HepG2 (cell line): ENCODE measurements at regions of chr9 and their contacts with region 1.

Region 1: DNA sequence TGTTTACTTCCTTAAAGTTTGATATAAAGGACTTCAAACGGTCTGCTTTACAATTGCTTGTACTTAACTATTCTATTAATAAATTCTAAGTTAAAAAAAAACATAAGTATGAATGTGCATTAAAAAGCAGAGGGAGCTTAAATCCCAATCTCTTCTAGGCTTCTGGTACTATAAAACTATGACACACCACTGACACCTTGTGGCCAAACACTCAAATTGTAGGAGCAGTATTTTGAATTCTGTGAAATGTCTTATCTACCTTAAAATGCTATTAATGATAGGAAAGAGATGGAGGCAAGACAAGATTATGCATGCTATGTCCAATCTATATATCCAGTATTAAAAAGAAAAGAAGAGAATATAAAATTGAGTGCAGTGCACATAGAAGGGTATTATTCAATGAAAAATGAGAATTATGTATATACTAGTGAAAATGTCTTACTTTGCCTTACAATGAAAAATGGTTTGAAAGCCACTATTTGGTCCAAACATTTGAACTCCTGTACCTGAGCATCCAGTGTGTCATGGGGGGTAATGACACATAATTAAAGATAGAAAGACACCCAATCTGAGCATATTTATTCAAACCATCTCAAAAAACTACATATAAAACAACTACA is 87.6 kb downstream of the ERP44 start:
- DNase-seq: peak; percentile 59
- ATAC-seq: peak; percentile 46; the same call in 1 of the 3 replicates
- H3K4me3 ChIP-seq: no peak overlapping the region
- H3K27ac ChIP-seq: no peak overlapping the region
- H3K4me1 ChIP-seq: no peaks in the 10 kb centered on the region
- H3K27me3 ChIP-seq: no peaks in the 10 kb centered on the region
- CTCF ChIP-seq: peak; percentile 70
- EP300 ChIP-seq: no peak
- POLR2A ChIP-seq: no peak
- RAD21 ChIP-seq: peak; percentile 47; the same call in 1 of the 2 replicates

Region 2: GRCh38 chr9:99162759-99163364 is 848.3 kb before region 1 on chr9:
- CTCF ChIA-PET with region 1: interaction called, 6 read pairs
- POLR2A ChIA-PET with region 1: no interaction called
- in situ Hi-C with region 1: no loop called
- intact Hi-C with region 1: loop called (anchors 1 kb)
- DNase-seq: peak; percentile 43
- ATAC-seq: peak; percentile 25; the same call in 1 of the 3 replicates
- H3K4me3 ChIP-seq: no peak overlapping the region
- H3K27ac ChIP-seq: no peak overlapping the region
- H3K4me1 ChIP-seq: peaks cover 11% of the 10 kb centered on the region
- H3K27me3 ChIP-seq: no peaks in the 10 kb centered on the region; a peak in 1 of 5 replicates
- CTCF ChIP-seq: peak; percentile 75
- EP300 ChIP-seq: no peak
- POLR2A ChIP-seq: no peak
- RAD21 ChIP-seq: peak; percentile 63

Region 3: GRCh38 chr9:99184475-99185347 is 826.5 kb before region 1 on chr9:
- CTCF ChIA-PET with region 1: interaction called, 5 read pairs
- POLR2A ChIA-PET with region 1: no interaction called
- in situ Hi-C with region 1: loop called (anchors 25 kb)
- intact Hi-C with region 1: loop called (anchors 2 kb)
- DNase-seq: peak; percentile 80
- ATAC-seq: peak; percentile 93
- H3K4me3 ChIP-seq: peak overlapping the region; percentile 21 to 74 (median 46); a peak in 5 of 6 replicates
- H3K27ac ChIP-seq: no peak overlapping the region
- H3K4me1 ChIP-seq: peaks cover 11% of the 10 kb centered on the region
- H3K27me3 ChIP-seq: peaks cover 0 to 23% of the 10 kb centered on the region in 2 experiments; a peak in 2 of 5 replicates
- CTCF ChIP-seq: peak; percentile 91
- EP300 ChIP-seq: no peak
- POLR2A ChIP-seq: no peak
- RAD21 ChIP-seq: peak; percentile 85

Region 4: GRCh38 chr9:99266255-99267023 is 744.7 kb before region 1 on chr9:
- CTCF ChIA-PET with region 1: interaction called, 3 read pairs
- POLR2A ChIA-PET with region 1: no interaction called
- in situ Hi-C with region 1: loop called (anchors 25 kb)
- intact Hi-C with region 1: loop called (anchors 2 kb)
- DNase-seq: peak; percentile 65
- ATAC-seq: peak; percentile 91
- H3K4me3 ChIP-seq: peak overlapping the region in 1 of 3 experiments; percentile 36; a peak in 1 of 6 replicates
- H3K27ac ChIP-seq: no peak overlapping the region
- H3K4me1 ChIP-seq: peaks cover 12% of the 10 kb centered on the region
- H3K27me3 ChIP-seq: no peaks in the 10 kb centered on the region
- CTCF ChIP-seq: peak; percentile 96
- EP300 ChIP-seq: peak in 1 of 2 experiments; percentile 28; a peak in 1 of 4 replicates
- POLR2A ChIP-seq: no peak
- RAD21 ChIP-seq: peak; percentile 87

Region 5: GRCh38 chr9:99807276-99807852 is 203.8 kb before region 1 on chr9:
- CTCF ChIA-PET with region 1: interaction called, 18 read pairs
- POLR2A ChIA-PET with region 1: no interaction called
- in situ Hi-C with region 1: loop called (anchors 10 kb)
- intact Hi-C with region 1: loop called (anchors 1 kb)
- DNase-seq: peak; percentile 50
- ATAC-seq: peak; percentile 68
- H3K4me3 ChIP-seq: no peak overlapping the region
- H3K27ac ChIP-seq: no peak overlapping the region
- H3K4me1 ChIP-seq: no peaks in the 10 kb centered on the region
- H3K27me3 ChIP-seq: no peaks in the 10 kb centered on the region
- CTCF ChIP-seq: peak; percentile 67
- EP300 ChIP-seq: no peak
- POLR2A ChIP-seq: no peak
- RAD21 ChIP-seq: peak; percentile 28; the same call in 1 of the 2 replicates

Region 6: GRCh38 chr9:99819856-99820684 is 191.1 kb before region 1 on chr9:
- CTCF ChIA-PET with region 1: no interaction called
- POLR2A ChIA-PET with region 1: no interaction called
- in situ Hi-C with region 1: loop called (anchors 10 kb)
- intact Hi-C with region 1: loop called (anchors 1 kb)
- DNase-seq: peak; percentile 81
- ATAC-seq: peak; percentile 52
- H3K4me3 ChIP-seq: peak overlapping the region; percentile 78 to 90 (median 89)
- H3K27ac ChIP-seq: peak overlapping the region; percentile 87
- H3K4me1 ChIP-seq: peaks cover 46% of the 10 kb centered on the region
- H3K27me3 ChIP-seq: peaks cover 4 to 28% of the 10 kb centered on the region in 2 experiments; a peak in 4 of 5 replicates
- CTCF ChIP-seq: peak; percentile 31
- EP300 ChIP-seq: no peak
- POLR2A ChIP-seq: no peak
- RAD21 ChIP-seq: no peak

Region 7: GRCh38 chr9:99906403-99907207 is 104.6 kb before region 1 on chr9 and contains the start of gene STX17:
- CTCF ChIA-PET with region 1: no interaction called
- POLR2A ChIA-PET with region 1: no interaction called
- in situ Hi-C with region 1: no loop called
- intact Hi-C with region 1: loop called (anchors 5 kb)
- DNase-seq: peak; percentile 61
- ATAC-seq: peak; percentile 92
- H3K4me3 ChIP-seq: peak within 1 kb of the TSS; percentile 80 to 96 (median 83)
- H3K27ac ChIP-seq: peak within 1 kb of the TSS; percentile 92
- H3K4me1 ChIP-seq: peaks cover 21% of the 10 kb centered on the region
- H3K27me3 ChIP-seq: no peaks in the 10 kb centered on the region; a peak in 1 of 5 replicates
- CTCF ChIP-seq: peak; percentile 22
- EP300 ChIP-seq: no peak
- POLR2A ChIP-seq: peak; percentile 75 to 80; a peak in 3 of 4 replicates
- RAD21 ChIP-seq: peak; percentile 10; the same call in 1 of the 2 replicates
- total RNA-seq, gene STX17: 25.7 and 28.9 TPM in 2 replicates